ENCODE measurements at regions of chr4 and their contacts with region 1.

Region 1: DNA sequence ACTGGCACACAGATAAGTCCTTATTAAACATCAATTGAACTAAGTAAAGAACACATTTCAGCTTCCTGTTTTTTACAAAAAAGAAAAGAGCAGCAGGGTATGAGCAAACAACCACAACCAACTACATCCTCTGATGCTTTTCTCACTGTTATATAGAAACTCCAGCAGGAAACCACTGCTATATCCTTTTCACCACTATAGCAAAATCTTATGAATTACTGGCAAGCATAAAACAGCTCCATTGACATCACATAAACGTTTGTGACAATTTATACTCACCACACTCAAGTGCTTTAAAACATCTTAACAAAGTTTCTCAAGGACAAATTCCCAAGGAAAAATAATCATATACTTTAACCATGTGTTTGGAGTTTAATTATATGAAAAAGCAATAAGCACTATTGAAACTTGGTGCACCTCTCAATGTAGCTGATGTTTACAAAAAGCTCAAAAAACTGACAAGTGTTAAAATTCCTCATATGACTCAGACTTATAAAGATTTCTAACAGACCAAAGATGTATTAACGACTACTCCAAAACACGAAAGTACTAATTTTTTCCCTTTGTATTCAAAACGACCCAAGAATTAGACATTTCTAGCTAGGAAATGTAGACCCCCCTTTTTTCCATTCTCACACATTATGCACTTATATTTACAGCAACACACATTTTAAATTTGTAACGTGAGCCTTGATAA is 12.9 kb downstream of the GPRIN3 start:
- DNase-seq: peak in 3 of 14 experiments; percentile 79 to 93 (median 85)
- ATAC-seq: peak; percentile 77
- H3K4me3 ChIP-seq: peak overlapping the region; percentile 4
- H3K4me3 Mint-ChIP-seq: peak overlapping the region; percentile 42
- H3K27ac ChIP-seq: peak overlapping the region; percentile 49 to 72
- H3K27ac Mint-ChIP-seq: peak overlapping the region; percentile 90
- H3K4me1 ChIP-seq: peaks cover 50% of the 10 kb centered on the region
- H3K4me1 Mint-ChIP-seq: peaks cover 94% of the 10 kb centered on the region
- H3K27me3 ChIP-seq: no peaks in the 10 kb centered on the region
- H3K27me3 Mint-ChIP-seq: no peaks in the 10 kb centered on the region
- CTCF ChIP-seq: no peak

Region 2: GRCh38 chr4:89158884-89159503 is 135.7 kb before region 1 on chr4:
- CTCF ChIA-PET with region 1: no interaction called
- POLR2A ChIA-PET with region 1: no interaction called
- intact Hi-C with region 1: no loop called
- DNase-seq: peak in 4 of 14 experiments; percentile 4 to 62 (median 46)
- ATAC-seq: peak; percentile 69
- H3K4me3 ChIP-seq: no peak overlapping the region
- H3K4me3 Mint-ChIP-seq: no peak overlapping the region
- H3K27ac ChIP-seq: no peak overlapping the region
- H3K27ac Mint-ChIP-seq: no peak overlapping the region
- H3K4me1 ChIP-seq: no peaks in the 10 kb centered on the region
- H3K4me1 Mint-ChIP-seq: no peaks in the 10 kb centered on the region
- H3K27me3 ChIP-seq: no peaks in the 10 kb centered on the region
- H3K27me3 Mint-ChIP-seq: peaks cover 3% of the 10 kb centered on the region
- CTCF ChIP-seq: peak; percentile 87

Region 3: GRCh38 chr4:89242864-89243732 is 51.6 kb before region 1 on chr4:
- CTCF ChIA-PET with region 1: no interaction called
- POLR2A ChIA-PET with region 1: interaction called, 10 read pairs
- intact Hi-C with region 1: loop called in 1 of 2 experiments (anchors 2 kb)
- DNase-seq: peak in 3 of 14 experiments; percentile 19 to 88 (median 82)
- ATAC-seq: peak; percentile 92
- H3K4me3 ChIP-seq: no peak overlapping the region
- H3K4me3 Mint-ChIP-seq: peak overlapping the region; percentile 9
- H3K27ac ChIP-seq: peak overlapping the region in 1 of 2 donors; percentile 25
- H3K27ac Mint-ChIP-seq: peak overlapping the region; percentile 84
- H3K4me1 ChIP-seq: peaks cover 21% of the 10 kb centered on the region
- H3K4me1 Mint-ChIP-seq: peaks cover 70% of the 10 kb centered on the region
- H3K27me3 ChIP-seq: no peaks in the 10 kb centered on the region
- H3K27me3 Mint-ChIP-seq: no peaks in the 10 kb centered on the region
- CTCF ChIP-seq: no peak

Region 4: GRCh38 chr4:89275587-89275986 is 19.1 kb before region 1 on chr4:
- CTCF ChIA-PET with region 1: interaction called, 5 read pairs
- POLR2A ChIA-PET with region 1: interaction called, 10 read pairs
- intact Hi-C with region 1: no loop called
- DNase-seq: no peak
- ATAC-seq: no peak
- H3K4me3 ChIP-seq: no peak overlapping the region
- H3K4me3 Mint-ChIP-seq: no peak overlapping the region
- H3K27ac ChIP-seq: no peak overlapping the region
- H3K27ac Mint-ChIP-seq: no peak overlapping the region
- H3K4me1 ChIP-seq: peaks cover 50% of the 10 kb centered on the region
- H3K4me1 Mint-ChIP-seq: peaks cover 76% of the 10 kb centered on the region
- H3K27me3 ChIP-seq: no peaks in the 10 kb centered on the region
- H3K27me3 Mint-ChIP-seq: no peaks in the 10 kb centered on the region
- CTCF ChIP-seq: no peak

Region 5: DNA sequence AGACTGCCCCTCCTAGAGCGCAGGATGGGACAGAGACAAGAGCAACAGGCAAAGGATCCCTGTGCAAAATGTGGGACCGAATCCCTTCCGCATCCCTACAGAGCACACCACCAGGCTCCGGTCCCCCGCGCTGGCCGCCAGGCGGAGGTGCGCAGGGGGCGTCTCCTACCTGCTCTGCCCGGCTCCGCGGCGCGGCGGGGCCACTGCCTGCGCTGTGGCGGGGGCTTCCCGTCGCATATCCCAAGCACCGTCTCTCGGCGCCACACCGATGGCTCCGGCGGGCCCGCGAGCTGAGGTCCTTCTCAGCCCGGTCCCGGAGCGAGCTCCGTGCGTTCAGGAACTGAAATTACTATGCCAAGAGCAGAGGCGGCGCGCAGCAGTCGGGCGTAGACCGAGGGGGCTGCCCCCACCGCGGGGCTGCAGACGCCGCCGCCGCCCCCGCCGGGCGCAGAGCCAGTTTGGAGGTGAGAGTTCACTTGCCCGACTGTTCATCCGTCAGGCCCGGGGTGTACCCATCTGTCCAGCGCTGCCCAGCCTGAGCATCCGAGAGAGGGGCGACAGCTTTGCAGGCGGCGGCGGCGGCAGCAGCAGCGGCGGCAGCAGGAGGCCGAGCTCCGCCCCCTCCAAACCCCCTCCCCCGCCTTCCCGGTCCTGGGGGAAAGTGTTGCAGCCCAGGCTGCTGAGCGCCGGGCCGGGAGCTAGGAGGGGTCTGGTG is 12.9 kb after region 1 on chr4 and contains the start of gene GPRIN3:
- CTCF ChIA-PET with region 1: interaction called, 9 read pairs
- POLR2A ChIA-PET with region 1: interaction called, 45 read pairs
- intact Hi-C with region 1: loop called in 1 of 2 experiments (anchors 2 kb)
- DNase-seq: peak; percentile 45 to 88 (median 63)
- ATAC-seq: peak; percentile 66
- H3K4me3 ChIP-seq: peak within 1 kb of the TSS; percentile 93
- H3K4me3 Mint-ChIP-seq: peak within 1 kb of the TSS; percentile 95
- H3K27ac ChIP-seq: peak within 1 kb of the TSS; percentile 73 to 88
- H3K27ac Mint-ChIP-seq: peak within 1 kb of the TSS; percentile 92
- H3K4me1 ChIP-seq: peaks cover 26% of the 10 kb centered on the region
- H3K4me1 Mint-ChIP-seq: peaks cover 67% of the 10 kb centered on the region
- H3K27me3 ChIP-seq: no peaks in the 10 kb centered on the region
- H3K27me3 Mint-ChIP-seq: no peaks in the 10 kb centered on the region
- CTCF ChIP-seq: no peak
- total RNA-seq, gene GPRIN3: 46.4 TPM

Region 6: GRCh38 chr4:89336818-89337420 is 42.2 kb after region 1 on chr4:
- CTCF ChIA-PET with region 1: no interaction called
- POLR2A ChIA-PET with region 1: interaction called, 7 read pairs
- intact Hi-C with region 1: loop called in 1 of 2 experiments (anchors 5 kb)
- DNase-seq: peak in 4 of 14 experiments; percentile 9 to 22 (median 10)
- ATAC-seq: no peak
- H3K4me3 ChIP-seq: no peak overlapping the region
- H3K4me3 Mint-ChIP-seq: no peak overlapping the region
- H3K27ac ChIP-seq: no peak overlapping the region
- H3K27ac Mint-ChIP-seq: no peak overlapping the region
- H3K4me1 ChIP-seq: peaks cover 5% of the 10 kb centered on the region
- H3K4me1 Mint-ChIP-seq: no peaks in the 10 kb centered on the region
- H3K27me3 ChIP-seq: no peaks in the 10 kb centered on the region
- H3K27me3 Mint-ChIP-seq: no peaks in the 10 kb centered on the region
- CTCF ChIP-seq: no peak

Measured in CD4-positive, alpha-beta T cell (primary cell).